WTC11 (cell line): ENCODE measurements at regions of chr12 and their contacts with region 1.

Region 1: DNA sequence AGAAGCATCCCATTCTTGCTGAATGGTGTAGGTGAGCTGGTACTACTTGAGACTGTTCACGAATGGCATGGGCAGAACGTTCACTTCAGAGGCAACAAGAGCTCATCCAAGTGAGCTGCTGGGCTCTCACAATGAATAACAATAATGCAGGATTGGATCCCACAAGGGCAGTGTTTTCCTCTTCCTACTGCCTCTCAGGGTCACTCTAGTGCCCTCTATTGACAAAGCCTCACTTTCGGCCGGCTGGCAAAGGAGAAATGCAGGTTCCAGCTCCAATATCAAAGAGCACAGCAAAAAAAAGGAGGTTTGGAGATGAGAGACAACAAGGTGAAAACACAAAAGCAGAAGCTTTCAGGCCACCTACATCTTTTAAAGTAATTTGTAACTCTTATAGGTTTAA is 74.6 kb upstream of the MYF6 start:
- DNase-seq: peak; percentile 70
- ATAC-seq: peak; percentile 99
- H3K4me3 Mint-ChIP-seq: no peak overlapping the region
- H3K27ac Mint-ChIP-seq: no peak overlapping the region
- H3K4me1 Mint-ChIP-seq: peaks cover 19% of the 10 kb centered on the region
- H3K27me3 Mint-ChIP-seq: no peaks in the 10 kb centered on the region
- CTCF ChIP-seq: no peak; the same call in 1 of the 2 replicates

Region 2: GRCh38 chr12:80607361-80608135 is 25.3 kb before region 1 on chr12:
- CTCF ChIA-PET with region 1: interaction called, 29 read pairs
- POLR2A ChIA-PET with region 1: no interaction called
- DNase-seq: no peak
- ATAC-seq: peak; percentile 46; the same call in 1 of the 2 replicates
- H3K4me3 Mint-ChIP-seq: no peak overlapping the region
- H3K27ac Mint-ChIP-seq: no peak overlapping the region
- H3K4me1 Mint-ChIP-seq: no peaks in the 10 kb centered on the region
- H3K27me3 Mint-ChIP-seq: no peaks in the 10 kb centered on the region
- CTCF ChIP-seq: 0 out of 2 replicates have a peak, but pooled peaks have one; percentile 17

Region 3: GRCh38 chr12:80622271-80622670 is 10.6 kb before region 1 on chr12:
- CTCF ChIA-PET with region 1: interaction called, 16 read pairs
- POLR2A ChIA-PET with region 1: no interaction called
- DNase-seq: no peak
- ATAC-seq: peak; percentile 50; the same call in 1 of the 2 replicates
- H3K4me3 Mint-ChIP-seq: no peak overlapping the region
- H3K27ac Mint-ChIP-seq: no peak overlapping the region
- H3K4me1 Mint-ChIP-seq: peaks cover 5% of the 10 kb centered on the region; the same call in 1 of the 2 replicates
- H3K27me3 Mint-ChIP-seq: no peaks in the 10 kb centered on the region
- CTCF ChIP-seq: no peak

Region 4: DNA sequence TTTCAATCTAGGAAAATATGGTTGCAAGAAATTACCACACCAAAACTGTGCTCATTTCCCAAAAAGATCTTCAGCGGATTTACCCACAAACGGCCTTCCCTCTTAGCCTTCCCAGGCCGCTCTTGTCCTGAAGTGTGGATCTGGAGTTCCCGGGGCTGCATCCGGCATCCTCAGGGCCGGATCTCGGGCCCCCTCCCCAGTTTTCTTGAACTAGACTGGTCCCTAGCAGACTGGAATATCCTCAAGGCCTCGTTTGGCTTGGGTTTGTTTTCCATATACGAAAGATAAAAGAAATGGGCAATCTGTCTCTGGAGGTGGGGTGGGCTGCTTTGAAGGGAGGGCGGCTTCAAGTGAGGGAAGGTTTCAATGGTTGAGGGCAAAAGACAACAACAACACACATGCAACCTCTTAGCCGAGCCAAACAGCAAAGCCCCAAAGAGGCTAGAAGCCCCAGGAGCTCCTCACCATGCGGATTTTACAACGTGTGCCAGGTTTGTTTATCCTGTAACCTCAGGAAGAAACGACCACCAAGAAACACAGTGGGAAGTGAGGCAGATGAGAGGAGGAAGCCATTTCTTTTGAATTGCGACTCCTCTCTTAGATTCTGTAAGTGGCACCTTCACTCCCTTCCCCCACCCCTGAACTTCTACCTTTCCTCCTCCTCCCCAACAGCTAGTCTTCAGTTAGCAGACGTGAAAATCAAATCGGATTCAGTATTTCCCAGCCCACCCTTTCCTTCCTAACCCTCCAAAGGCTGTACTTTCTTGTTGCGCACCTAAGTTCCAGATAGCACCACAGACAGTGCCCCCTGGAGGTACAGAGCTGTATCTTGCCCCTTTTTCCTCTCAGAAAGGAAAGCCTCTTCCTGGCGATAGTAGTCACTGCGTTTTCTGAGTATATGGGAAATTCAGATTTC is 77.2 kb after region 1 on chr12:
- CTCF ChIA-PET with region 1: interaction called, 19 read pairs
- POLR2A ChIA-PET with region 1: no interaction called
- DNase-seq: peak; percentile 62
- ATAC-seq: peak; percentile 40
- H3K4me3 Mint-ChIP-seq: peak overlapping the region; percentile 65
- H3K27ac Mint-ChIP-seq: no peak overlapping the region
- H3K4me1 Mint-ChIP-seq: peaks cover 65% of the 10 kb centered on the region
- H3K27me3 Mint-ChIP-seq: peaks cover 99% of the 10 kb centered on the region
- CTCF ChIP-seq: peak; percentile 58